Caco-2 (cell line): ENCODE measurements at regions of chr3 and their contacts with region 1.

Region 1: GRCh38 chr3:30258426-30259392 is 347.7 kb upstream of the TGFBR2 start:
- DNase-seq: peak; percentile 89 to 93
- H3K4me3 ChIP-seq: no peak overlapping the region
- H3K4me3 Mint-ChIP-seq: peak overlapping the region; percentile 12
- H3K27ac Mint-ChIP-seq: peak overlapping the region; percentile 12
- H3K4me1 ChIP-seq: peaks cover 57% of the 10 kb centered on the region
- H3K4me1 Mint-ChIP-seq: peaks cover 36% of the 10 kb centered on the region
- H3K27me3 ChIP-seq: no peaks in the 10 kb centered on the region
- H3K27me3 Mint-ChIP-seq: no peaks in the 10 kb centered on the region
- CTCF ChIP-seq: no peak

Region 2: DNA sequence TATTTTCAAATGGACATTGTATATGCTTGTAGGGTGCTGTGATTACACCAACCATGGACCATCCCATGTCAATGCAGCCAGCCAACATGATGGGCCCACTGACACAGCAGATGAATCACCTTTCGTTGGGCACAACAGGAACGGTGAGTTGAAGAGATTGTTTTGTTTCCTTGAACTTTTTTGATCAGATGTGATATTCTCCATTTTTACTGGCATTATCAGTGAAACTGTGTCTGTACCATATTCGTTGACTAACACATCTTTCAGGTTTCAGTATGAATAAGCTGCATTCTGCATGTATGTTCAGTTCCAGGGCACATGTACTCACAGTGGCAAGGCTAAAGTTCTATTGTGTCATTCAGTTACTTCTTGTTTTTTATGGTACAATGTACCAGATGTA is 322.7 kb before region 1 on chr3:
- CTCF ChIA-PET with region 1: no interaction called
- POLR2A ChIA-PET with region 1: no interaction called
- intact Hi-C with region 1: no loop called
- DNase-seq: no peak
- H3K4me3 ChIP-seq: no peak overlapping the region
- H3K4me3 Mint-ChIP-seq: no peak overlapping the region
- H3K27ac Mint-ChIP-seq: no peak overlapping the region
- H3K4me1 ChIP-seq: peaks cover 1% of the 10 kb centered on the region; the same call in 1 of the 2 replicates
- H3K4me1 Mint-ChIP-seq: peaks cover 14% of the 10 kb centered on the region
- H3K27me3 ChIP-seq: no peaks in the 10 kb centered on the region
- H3K27me3 Mint-ChIP-seq: no peaks in the 10 kb centered on the region
- CTCF ChIP-seq: no peak

Region 3: DNA sequence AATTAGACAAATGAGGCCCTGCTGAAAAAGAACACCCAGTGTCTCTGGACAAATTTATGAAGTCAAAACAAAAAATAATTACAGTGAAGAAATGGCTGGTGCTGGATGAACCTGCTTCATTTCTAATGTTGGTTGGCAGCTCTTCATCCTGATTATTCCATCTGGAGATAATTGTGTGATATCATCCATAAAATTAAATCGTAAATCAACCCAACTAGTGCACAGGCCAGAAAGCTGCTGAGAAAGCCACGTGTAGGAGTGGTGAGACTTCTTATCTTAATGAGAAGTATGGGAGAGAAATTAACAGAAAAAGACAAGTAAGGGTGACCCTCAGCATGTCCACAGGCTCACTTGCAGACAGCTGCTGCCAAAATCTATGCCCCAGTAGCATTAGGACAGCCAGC is 117.5 kb before region 1 on chr3:
- CTCF ChIA-PET with region 1: no interaction called
- POLR2A ChIA-PET with region 1: no interaction called
- intact Hi-C with region 1: no loop called
- DNase-seq: no peak
- H3K4me3 ChIP-seq: no peak overlapping the region
- H3K4me3 Mint-ChIP-seq: no peak overlapping the region
- H3K27ac Mint-ChIP-seq: no peak overlapping the region
- H3K4me1 ChIP-seq: peaks cover 3% of the 10 kb centered on the region; the same call in 1 of the 2 replicates
- H3K4me1 Mint-ChIP-seq: peaks cover 12% of the 10 kb centered on the region
- H3K27me3 ChIP-seq: no peaks in the 10 kb centered on the region
- H3K27me3 Mint-ChIP-seq: no peaks in the 10 kb centered on the region
- CTCF ChIP-seq: no peak

Region 4: DNA sequence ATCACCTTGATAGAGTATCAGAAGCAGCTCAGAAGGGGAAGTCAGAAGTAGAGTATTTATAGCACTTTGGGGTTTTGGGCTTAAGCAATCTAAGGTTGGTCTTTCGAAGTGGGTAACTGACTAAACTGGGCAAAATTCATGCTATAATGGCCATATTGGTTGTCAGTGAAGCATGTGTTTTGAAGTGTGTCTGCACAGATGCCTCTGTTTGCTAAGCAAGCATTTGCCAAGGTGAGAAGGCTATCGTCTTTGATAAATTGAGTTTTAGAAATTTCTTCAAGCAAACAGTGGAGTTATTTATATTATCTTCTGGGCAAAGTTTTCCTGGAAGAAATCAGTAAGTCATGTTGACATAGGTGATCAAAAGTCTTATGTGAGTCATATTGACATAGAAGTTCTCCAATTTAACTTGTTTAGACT is 65.1 kb before region 1 on chr3:
- CTCF ChIA-PET with region 1: no interaction called
- POLR2A ChIA-PET with region 1: no interaction called
- intact Hi-C with region 1: loop called (anchors 1 kb)
- DNase-seq: peak; percentile 53 to 60
- H3K4me3 ChIP-seq: no peak overlapping the region
- H3K4me3 Mint-ChIP-seq: no peak overlapping the region
- H3K27ac Mint-ChIP-seq: peak overlapping the region; percentile 5
- H3K4me1 ChIP-seq: peaks cover 34% of the 10 kb centered on the region
- H3K4me1 Mint-ChIP-seq: peaks cover 16% of the 10 kb centered on the region
- H3K27me3 ChIP-seq: no peaks in the 10 kb centered on the region
- H3K27me3 Mint-ChIP-seq: no peaks in the 10 kb centered on the region
- CTCF ChIP-seq: no peak

Region 5: GRCh38 chr3:30299674-30300385 is 41.1 kb after region 1 on chr3:
- CTCF ChIA-PET with region 1: no interaction called
- POLR2A ChIA-PET with region 1: no interaction called
- intact Hi-C with region 1: loop called (anchors 1 kb)
- DNase-seq: peak; percentile 42 to 48
- H3K4me3 ChIP-seq: no peak overlapping the region
- H3K4me3 Mint-ChIP-seq: no peak overlapping the region
- H3K27ac Mint-ChIP-seq: peak overlapping the region; percentile 61
- H3K4me1 ChIP-seq: peaks cover 39% of the 10 kb centered on the region
- H3K4me1 Mint-ChIP-seq: peaks cover 23% of the 10 kb centered on the region
- H3K27me3 ChIP-seq: no peaks in the 10 kb centered on the region
- H3K27me3 Mint-ChIP-seq: no peaks in the 10 kb centered on the region
- CTCF ChIP-seq: no peak

Region 6: DNA sequence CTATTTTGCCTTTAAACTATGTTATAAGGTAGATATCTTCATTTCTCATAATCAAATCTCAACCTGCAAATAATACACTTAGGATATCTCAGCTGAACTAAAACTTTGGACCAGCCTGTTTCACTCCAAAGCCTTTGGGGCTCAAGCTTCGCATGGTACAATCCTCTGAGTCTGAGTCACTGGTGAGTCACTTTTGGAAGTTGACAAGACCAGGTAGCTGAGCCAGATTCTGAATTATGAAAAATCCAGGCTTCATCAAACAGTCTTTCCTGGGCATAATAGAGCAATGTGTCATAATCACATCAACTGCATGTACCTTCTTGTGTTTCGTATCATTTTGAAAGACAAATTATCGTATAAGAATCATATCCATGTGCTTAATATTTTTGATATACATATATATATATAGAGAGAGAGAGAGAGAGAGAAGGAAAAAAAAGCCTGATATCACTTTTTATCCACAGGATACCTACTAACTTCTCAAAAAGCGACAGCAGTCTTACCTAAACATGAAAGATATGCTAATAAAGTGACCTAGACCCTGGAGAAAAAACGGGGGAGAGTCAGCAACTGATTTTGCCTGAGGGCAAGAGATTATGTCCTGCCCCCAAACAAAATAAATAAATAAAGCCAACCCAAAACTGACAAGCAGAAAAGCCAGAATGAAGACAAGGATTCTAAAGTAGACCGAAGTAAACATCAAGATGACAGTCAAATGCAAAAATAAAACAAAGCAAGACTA is 83.8 kb after region 1 on chr3:
- CTCF ChIA-PET with region 1: no interaction called
- POLR2A ChIA-PET with region 1: no interaction called
- intact Hi-C with region 1: loop called (anchors 2 kb)
- DNase-seq: peak; percentile 54 to 65
- H3K4me3 ChIP-seq: no peak overlapping the region
- H3K4me3 Mint-ChIP-seq: peak overlapping the region; percentile 61
- H3K27ac Mint-ChIP-seq: peak overlapping the region; percentile 86
- H3K4me1 ChIP-seq: peaks cover 37% of the 10 kb centered on the region
- H3K4me1 Mint-ChIP-seq: peaks cover 35% of the 10 kb centered on the region
- H3K27me3 ChIP-seq: no peaks in the 10 kb centered on the region
- H3K27me3 Mint-ChIP-seq: no peaks in the 10 kb centered on the region
- CTCF ChIP-seq: no peak

Region 7: DNA sequence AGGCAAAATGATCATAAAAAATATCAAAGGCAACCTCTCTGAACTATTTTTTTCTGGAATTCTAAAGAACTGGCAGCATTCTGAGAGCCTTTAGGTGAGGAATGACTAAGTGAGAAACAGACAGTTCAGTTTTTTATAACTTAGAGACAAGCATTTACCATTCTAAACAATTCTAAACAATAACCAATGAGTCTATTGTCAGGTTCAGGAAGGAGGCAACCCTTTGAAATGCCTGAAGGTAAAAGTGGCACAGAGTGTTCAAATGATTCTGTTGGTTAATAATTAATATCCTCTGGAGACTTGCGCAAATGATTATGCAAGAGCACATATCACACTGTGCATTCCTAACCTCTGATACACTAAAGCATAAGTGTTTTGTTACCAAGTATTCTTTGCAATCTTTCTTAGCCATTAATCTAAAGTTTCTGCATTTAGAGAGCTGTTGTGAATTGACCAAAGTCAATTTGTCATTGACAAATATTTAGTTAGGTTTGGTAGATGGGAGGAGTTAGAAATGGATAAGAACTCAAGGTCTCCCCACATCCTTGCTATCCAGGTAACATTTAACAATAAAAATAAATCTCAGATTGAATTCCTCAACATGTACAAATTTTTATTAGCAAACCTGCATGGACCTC is 338.5 kb after region 1 on chr3:
- CTCF ChIA-PET with region 1: no interaction called
- POLR2A ChIA-PET with region 1: no interaction called
- intact Hi-C with region 1: loop called (anchors 1 kb)
- DNase-seq: peak; percentile 63 to 79
- H3K4me3 ChIP-seq: no peak overlapping the region
- H3K4me3 Mint-ChIP-seq: peak overlapping the region; percentile 31
- H3K27ac Mint-ChIP-seq: peak overlapping the region; percentile 89
- H3K4me1 ChIP-seq: peaks cover 45% of the 10 kb centered on the region
- H3K4me1 Mint-ChIP-seq: peaks cover 16% of the 10 kb centered on the region
- H3K27me3 ChIP-seq: no peaks in the 10 kb centered on the region
- H3K27me3 Mint-ChIP-seq: no peaks in the 10 kb centered on the region
- CTCF ChIP-seq: no peak

Region 8: DNA sequence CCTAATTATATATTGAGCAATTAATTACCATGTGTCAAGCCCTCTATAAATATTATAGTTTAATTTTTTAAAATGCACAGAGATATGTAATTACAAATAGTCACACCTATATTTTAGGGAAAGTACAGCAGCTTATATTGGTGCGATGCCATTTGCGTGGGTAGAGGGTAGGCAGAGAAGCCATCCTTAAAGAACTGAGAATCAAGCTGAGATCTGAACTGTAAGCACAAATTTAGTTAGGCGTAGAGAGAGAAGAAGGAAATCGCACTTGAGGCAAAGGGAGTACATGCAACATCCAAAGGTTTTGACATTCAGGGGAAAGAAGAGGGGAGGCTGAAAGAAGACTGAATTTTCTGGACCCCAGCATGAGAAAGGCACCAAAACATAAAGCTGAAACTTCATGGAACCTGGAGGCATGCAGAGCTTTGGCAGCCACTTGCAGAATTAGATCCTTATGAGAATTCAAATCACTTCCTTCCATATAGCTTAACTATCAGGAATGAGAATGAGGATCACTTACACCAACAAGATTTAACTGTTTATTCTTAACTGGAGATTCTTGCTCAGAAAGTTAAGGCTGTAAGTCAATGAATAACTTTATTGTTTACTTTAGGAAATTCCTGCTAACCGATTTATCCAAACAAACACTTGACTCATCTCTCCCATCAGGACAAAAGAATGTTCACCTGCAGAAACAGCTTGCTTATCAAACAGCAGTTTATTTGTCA is 462.0 kb after region 1 on chr3:
- CTCF ChIA-PET with region 1: no interaction called
- POLR2A ChIA-PET with region 1: no interaction called
- intact Hi-C with region 1: loop called (anchors 1 kb)
- DNase-seq: peak in 1 of 2 experiments; percentile 71
- H3K4me3 ChIP-seq: no peak overlapping the region
- H3K4me3 Mint-ChIP-seq: peak overlapping the region; percentile 26
- H3K27ac Mint-ChIP-seq: peak overlapping the region; percentile 83
- H3K4me1 ChIP-seq: peaks cover 34% of the 10 kb centered on the region
- H3K4me1 Mint-ChIP-seq: peaks cover 34% of the 10 kb centered on the region
- H3K27me3 ChIP-seq: no peaks in the 10 kb centered on the region
- H3K27me3 Mint-ChIP-seq: no peaks in the 10 kb centered on the region
- CTCF ChIP-seq: no peak